ENCODE measurements at regions of chr22 and their contacts with region 1.

Region 1: GRCh38 chr22:36486619-36487384 is 5.4 kb upstream of the TXN2 start:
- DNase-seq: peak; percentile 77
- ATAC-seq: no peak
- H3K4me3 ChIP-seq: no peak overlapping the region
- H3K4me3 Mint-ChIP-seq: no peak overlapping the region
- H3K27ac ChIP-seq: no peak overlapping the region
- H3K27ac Mint-ChIP-seq: peak overlapping the region; percentile 38
- H3K4me1 ChIP-seq: peaks cover 11 to 14% of the 10 kb centered on the region in 2 donors
- H3K4me1 Mint-ChIP-seq: peaks cover 12% of the 10 kb centered on the region
- H3K27me3 ChIP-seq: no peaks in the 10 kb centered on the region
- H3K27me3 Mint-ChIP-seq: no peaks in the 10 kb centered on the region
- CTCF ChIP-seq: peak; percentile 74

Region 2: DNA sequence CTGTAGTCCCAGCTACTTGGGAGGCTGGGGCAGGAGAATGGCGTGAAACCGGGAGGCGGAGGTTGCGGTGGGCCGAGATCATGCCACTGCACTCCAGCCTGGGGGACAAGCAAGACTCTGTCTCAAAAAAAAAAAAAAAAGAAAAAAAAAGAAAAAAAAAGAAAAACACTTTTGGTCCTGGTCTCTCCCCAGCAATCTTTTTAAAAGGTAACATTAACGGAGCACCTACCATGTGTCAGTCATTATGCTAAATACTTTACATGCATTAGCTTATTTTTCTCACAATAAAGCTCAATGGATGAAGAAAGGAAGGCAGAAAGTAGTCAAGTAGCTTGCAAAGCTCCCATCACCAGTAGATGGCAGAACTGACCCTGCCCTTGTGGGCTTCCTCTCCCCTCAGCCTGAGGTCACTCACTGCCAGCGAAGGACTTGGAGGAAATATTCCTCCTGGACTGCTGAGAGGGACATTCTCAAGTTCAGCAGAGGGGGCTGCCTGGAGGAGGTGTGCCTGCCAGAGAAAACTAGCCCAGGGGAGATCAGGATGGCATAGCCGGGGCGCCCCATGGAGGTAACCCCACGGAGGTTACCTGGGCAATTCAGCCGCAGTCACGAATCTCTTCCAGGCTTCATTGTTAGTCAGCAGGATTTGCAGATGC is 341.8 kb before region 1 on chr22:
- CTCF ChIA-PET with region 1: interaction called, 10 read pairs
- POLR2A ChIA-PET with region 1: no interaction called
- intact Hi-C with region 1: no loop called
- DNase-seq: peak; percentile 55
- ATAC-seq: peak; percentile 74
- H3K4me3 ChIP-seq: no peak overlapping the region
- H3K4me3 Mint-ChIP-seq: no peak overlapping the region
- H3K27ac ChIP-seq: no peak overlapping the region
- H3K27ac Mint-ChIP-seq: no peak overlapping the region
- H3K4me1 ChIP-seq: no peaks in the 10 kb centered on the region
- H3K4me1 Mint-ChIP-seq: peaks cover 1% of the 10 kb centered on the region
- H3K27me3 ChIP-seq: no peaks in the 10 kb centered on the region
- H3K27me3 Mint-ChIP-seq: no peaks in the 10 kb centered on the region
- CTCF ChIP-seq: peak; percentile 69

Region 3: GRCh38 chr22:36180038-36180880 is 306.5 kb before region 1 on chr22:
- CTCF ChIA-PET with region 1: interaction called, 10 read pairs
- POLR2A ChIA-PET with region 1: no interaction called
- intact Hi-C with region 1: no loop called
- DNase-seq: peak; percentile 86
- ATAC-seq: peak; percentile 98
- H3K4me3 ChIP-seq: no peak overlapping the region
- H3K4me3 Mint-ChIP-seq: no peak overlapping the region
- H3K27ac ChIP-seq: no peak overlapping the region
- H3K27ac Mint-ChIP-seq: no peak overlapping the region
- H3K4me1 ChIP-seq: peaks cover 0 to 5% of the 10 kb centered on the region in 2 donors
- H3K4me1 Mint-ChIP-seq: peaks cover 5% of the 10 kb centered on the region
- H3K27me3 ChIP-seq: no peaks in the 10 kb centered on the region
- H3K27me3 Mint-ChIP-seq: peaks cover 3% of the 10 kb centered on the region
- CTCF ChIP-seq: peak; percentile 91

Region 4: DNA sequence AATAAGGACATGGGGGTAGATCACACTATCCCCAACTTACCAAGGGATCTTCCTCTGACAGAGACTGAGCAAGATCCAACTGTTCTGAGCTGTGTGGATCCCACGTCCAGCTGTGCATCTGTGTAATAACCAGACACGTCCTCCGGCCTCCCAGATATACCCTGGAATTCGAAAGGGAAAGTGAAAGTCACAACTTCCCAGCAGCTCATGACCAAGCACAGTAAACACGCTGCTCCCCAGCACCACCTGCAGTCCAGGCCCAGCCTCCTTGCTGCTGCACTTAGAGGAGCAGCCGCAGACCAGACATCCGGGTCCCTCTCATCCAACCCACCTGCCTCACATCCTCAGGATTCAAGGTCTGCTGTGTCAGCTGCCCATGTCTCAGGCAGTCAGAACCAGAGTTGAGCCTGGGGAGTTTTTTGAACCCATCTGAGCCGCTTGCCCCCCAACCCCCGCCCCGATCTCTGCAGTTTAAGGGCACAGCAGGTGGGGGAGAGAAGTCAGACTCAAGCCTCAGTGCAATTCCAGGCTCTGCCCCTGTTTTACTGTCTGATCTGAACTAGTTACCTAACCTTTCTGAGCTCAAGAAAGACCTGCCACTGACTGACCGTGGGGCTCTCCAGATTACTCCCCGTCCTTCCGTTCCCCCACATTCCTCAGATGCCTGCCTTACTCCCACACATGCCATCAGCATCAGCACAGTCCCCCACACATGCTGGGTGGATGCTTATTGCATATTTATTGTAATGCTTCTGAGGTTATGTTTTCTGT is 247.2 kb before region 1 on chr22 and contains the start of gene APOL2:
- CTCF ChIA-PET with region 1: interaction called, 10 read pairs
- POLR2A ChIA-PET with region 1: no interaction called
- intact Hi-C with region 1: loop called (anchors 1 kb)
- DNase-seq: peak; percentile 86
- ATAC-seq: peak; percentile 99
- H3K4me3 ChIP-seq: peak within 1 kb of the TSS; percentile 59 to 94 (median 81)
- H3K4me3 Mint-ChIP-seq: peak within 1 kb of the TSS; percentile 93
- H3K27ac ChIP-seq: peak within 1 kb of the TSS; percentile 61 to 77
- H3K27ac Mint-ChIP-seq: peak within 1 kb of the TSS; percentile 97
- H3K4me1 ChIP-seq: peaks cover 21 to 28% of the 10 kb centered on the region in 2 donors
- H3K4me1 Mint-ChIP-seq: peaks cover 43% of the 10 kb centered on the region
- H3K27me3 ChIP-seq: no peaks in the 10 kb centered on the region
- H3K27me3 Mint-ChIP-seq: no peaks in the 10 kb centered on the region
- CTCF ChIP-seq: peak; percentile 71
- total RNA-seq, gene APOL2: 56.8 and 60.6 TPM in 2 replicates

Region 5: DNA sequence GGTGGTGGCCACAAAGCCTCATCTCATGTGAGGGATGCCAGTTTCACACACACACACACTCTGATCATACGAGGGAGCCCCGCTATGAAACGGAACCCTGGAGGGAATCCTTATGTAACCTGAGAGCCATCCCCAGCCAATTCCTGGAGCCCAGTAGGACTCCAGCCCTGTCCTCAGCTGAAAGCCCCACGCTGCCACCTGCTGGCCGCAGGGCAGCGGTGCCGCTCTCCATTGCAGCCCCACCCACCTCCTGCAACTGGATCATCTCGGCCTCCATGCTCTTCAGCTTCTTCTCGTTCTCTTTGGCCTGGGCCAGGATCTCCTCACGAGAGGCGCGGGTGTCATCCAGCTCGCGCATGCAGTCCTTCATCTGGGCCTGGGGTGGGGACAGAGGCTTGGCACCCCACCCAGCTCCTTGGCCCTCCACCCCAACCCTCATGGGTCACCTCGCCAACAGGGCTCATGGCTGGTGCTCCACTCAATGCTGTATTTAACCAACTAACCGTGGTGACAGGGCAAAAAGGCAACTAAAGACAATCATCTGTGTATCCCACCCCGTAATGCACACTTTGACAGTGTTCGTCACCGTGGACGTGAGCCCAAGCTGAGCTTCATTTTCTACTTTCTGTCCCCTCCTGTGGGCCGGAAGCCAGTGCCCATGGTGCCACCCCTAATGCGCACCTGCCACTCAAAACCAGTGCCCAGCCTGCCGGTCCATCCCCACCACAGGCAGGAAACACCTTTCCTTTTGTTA is 200.2 kb before region 1 on chr22:
- CTCF ChIA-PET with region 1: interaction called, 607 read pairs
- POLR2A ChIA-PET with region 1: no interaction called
- intact Hi-C with region 1: no loop called
- DNase-seq: peak; percentile 74
- ATAC-seq: peak; percentile 87
- H3K4me3 ChIP-seq: no peak overlapping the region
- H3K4me3 Mint-ChIP-seq: no peak overlapping the region
- H3K27ac ChIP-seq: peak overlapping the region in 1 of 2 donors; percentile 28
- H3K27ac Mint-ChIP-seq: peak overlapping the region; percentile 12
- H3K4me1 ChIP-seq: no peaks in the 10 kb centered on the region
- H3K4me1 Mint-ChIP-seq: no peaks in the 10 kb centered on the region
- H3K27me3 ChIP-seq: no peaks in the 10 kb centered on the region
- H3K27me3 Mint-ChIP-seq: no peaks in the 10 kb centered on the region
- CTCF ChIP-seq: peak; percentile 86

Region 6: GRCh38 chr22:36377022-36377631 is 109.7 kb before region 1 on chr22:
- CTCF ChIA-PET with region 1: interaction called, 12 read pairs
- POLR2A ChIA-PET with region 1: interaction called, 5 read pairs
- intact Hi-C with region 1: no loop called
- DNase-seq: peak; percentile 71
- ATAC-seq: peak; percentile 71
- H3K4me3 ChIP-seq: peak overlapping the region in 4 of 5 experiments; percentile 7 to 59 (median 38)
- H3K4me3 Mint-ChIP-seq: peak overlapping the region; percentile 70
- H3K27ac ChIP-seq: peak overlapping the region; percentile 88 to 90
- H3K27ac Mint-ChIP-seq: peak overlapping the region; percentile 88
- H3K4me1 ChIP-seq: peaks cover 98 to 99% of the 10 kb centered on the region in 2 donors
- H3K4me1 Mint-ChIP-seq: peaks cover 86% of the 10 kb centered on the region
- H3K27me3 ChIP-seq: no peaks in the 10 kb centered on the region
- H3K27me3 Mint-ChIP-seq: no peaks in the 10 kb centered on the region
- CTCF ChIP-seq: no peak

Region 7: GRCh38 chr22:36546092-36546804 is 59.4 kb after region 1 on chr22:
- CTCF ChIA-PET with region 1: no interaction called
- POLR2A ChIA-PET with region 1: no interaction called
- intact Hi-C with region 1: no loop called
- DNase-seq: peak; percentile 67
- ATAC-seq: peak; percentile 79
- H3K4me3 ChIP-seq: no peak overlapping the region
- H3K4me3 Mint-ChIP-seq: no peak overlapping the region
- H3K27ac ChIP-seq: no peak overlapping the region
- H3K27ac Mint-ChIP-seq: no peak overlapping the region
- H3K4me1 ChIP-seq: peaks cover 15 to 32% of the 10 kb centered on the region in 2 donors
- H3K4me1 Mint-ChIP-seq: peaks cover 19% of the 10 kb centered on the region
- H3K27me3 ChIP-seq: no peaks in the 10 kb centered on the region
- H3K27me3 Mint-ChIP-seq: no peaks in the 10 kb centered on the region
- CTCF ChIP-seq: peak; percentile 67

Region 8: GRCh38 chr22:36613958-36614357 is 127.2 kb after region 1 on chr22:
- CTCF ChIA-PET with region 1: no interaction called
- POLR2A ChIA-PET with region 1: no interaction called
- intact Hi-C with region 1: no loop called
- DNase-seq: no peak
- ATAC-seq: no peak
- H3K4me3 ChIP-seq: no peak overlapping the region
- H3K4me3 Mint-ChIP-seq: no peak overlapping the region
- H3K27ac ChIP-seq: no peak overlapping the region
- H3K27ac Mint-ChIP-seq: no peak overlapping the region
- H3K4me1 ChIP-seq: no peaks in the 10 kb centered on the region
- H3K4me1 Mint-ChIP-seq: no peaks in the 10 kb centered on the region
- H3K27me3 ChIP-seq: peaks cover 0 to 35% (median 10%) of the 10 kb centered on the region in 4 experiments
- H3K27me3 Mint-ChIP-seq: peaks cover 67% of the 10 kb centered on the region
- CTCF ChIP-seq: no peak